ENCODE measurements at regions of chr7 and their contacts with region 1.

Region 1: GRCh38 chr7:24979863-24980533 is at the start of gene OSBPL3:
- DNase-seq: peak; percentile 94
- H3K4me3 ChIP-seq: peak within 1 kb of the TSS; percentile 80 to 85 (median 81)
- H3K27ac ChIP-seq: peak within 1 kb of the TSS; percentile 85
- H3K4me1 ChIP-seq: peaks cover 45% of the 10 kb centered on the region
- H3K27me3 ChIP-seq: no peaks in the 10 kb centered on the region
- CTCF ChIP-seq: no peak
- total RNA-seq, gene OSBPL3: 42.7 to 64.8 TPM

Region 2: GRCh38 chr7:24882989-24883621 is 96.9 kb before region 1 on chr7:
- CTCF ChIA-PET with region 1: no interaction called
- dilution Hi-C with region 1: no loop called
- in situ Hi-C with region 1: no loop called
- intact Hi-C with region 1: loop called (anchors 1 kb)
- DNase-seq: peak; percentile 71
- H3K4me3 ChIP-seq: no peak overlapping the region
- H3K27ac ChIP-seq: peak overlapping the region; percentile 31
- H3K4me1 ChIP-seq: peaks cover 14% of the 10 kb centered on the region
- H3K27me3 ChIP-seq: no peaks in the 10 kb centered on the region
- CTCF ChIP-seq: no peak

Region 3: DNA sequence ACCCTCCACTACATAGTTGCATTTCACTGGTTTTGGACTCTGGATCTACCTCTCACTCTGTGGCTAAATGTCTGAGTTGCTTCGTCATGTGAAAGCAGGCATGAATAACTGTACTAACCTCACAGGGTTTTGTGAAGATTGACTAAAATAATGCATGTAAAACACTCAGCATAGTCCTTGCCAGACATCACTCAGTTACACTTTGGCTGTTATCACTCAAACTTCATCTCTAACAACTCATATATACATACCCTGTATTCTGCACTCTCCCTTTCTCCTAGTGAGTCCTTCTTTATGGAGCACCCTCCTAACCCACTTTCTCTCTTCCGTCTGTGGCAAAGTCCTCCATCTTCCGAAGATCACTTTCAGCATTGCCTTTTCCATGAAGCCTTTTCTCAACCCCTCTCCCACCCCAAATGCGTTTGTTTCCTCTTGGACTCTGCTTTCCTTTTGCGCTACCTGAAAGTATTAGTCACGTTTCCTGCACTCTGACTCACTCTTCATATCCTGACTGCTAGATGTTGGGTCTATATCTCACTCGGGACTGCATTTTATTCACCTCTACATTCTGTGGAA is 72.6 kb before region 1 on chr7:
- CTCF ChIA-PET with region 1: no interaction called
- dilution Hi-C with region 1: no loop called
- in situ Hi-C with region 1: no loop called
- intact Hi-C with region 1: loop called (anchors 1 kb)
- DNase-seq: peak; percentile 87
- H3K4me3 ChIP-seq: peak overlapping the region in 2 of 3 experiments; percentile 18 to 36
- H3K27ac ChIP-seq: peak overlapping the region; percentile 77
- H3K4me1 ChIP-seq: peaks cover 62% of the 10 kb centered on the region
- H3K27me3 ChIP-seq: no peaks in the 10 kb centered on the region
- CTCF ChIP-seq: no peak

Region 4: GRCh38 chr7:25069900-25070443 is 90.0 kb after region 1 on chr7:
- CTCF ChIA-PET with region 1: no interaction called
- dilution Hi-C with region 1: loop called (anchors 5 kb)
- in situ Hi-C with region 1: loop called in 1 of 2 experiments (anchors 5 kb)
- intact Hi-C with region 1: loop called (anchors 1 kb)
- DNase-seq: peak; percentile 45
- H3K4me3 ChIP-seq: no peak overlapping the region
- H3K27ac ChIP-seq: no peak overlapping the region
- H3K4me1 ChIP-seq: no peaks in the 10 kb centered on the region
- H3K27me3 ChIP-seq: no peaks in the 10 kb centered on the region
- CTCF ChIP-seq: peak; percentile 77 to 84

Region 5: GRCh38 chr7:25093268-25093826 is 113.3 kb after region 1 on chr7:
- CTCF ChIA-PET with region 1: interaction called, 4 read pairs
- dilution Hi-C with region 1: no loop called
- in situ Hi-C with region 1: no loop called
- intact Hi-C with region 1: loop called (anchors 1 kb)
- DNase-seq: peak; percentile 65
- H3K4me3 ChIP-seq: no peak overlapping the region
- H3K27ac ChIP-seq: no peak overlapping the region
- H3K4me1 ChIP-seq: peaks cover 3% of the 10 kb centered on the region
- H3K27me3 ChIP-seq: no peaks in the 10 kb centered on the region
- CTCF ChIP-seq: peak; percentile 66 to 95